ENCODE measurements at regions of chr17 and their contacts with region 1.

Region 1: GRCh38 chr17:42312285-42313130 is 24.2 kb downstream of the STAT5A start:
- DNase-seq: peak; percentile 77 to 86
- ATAC-seq: peak; percentile 74 to 89
- H3K4me3 ChIP-seq: no peak overlapping the region
- H3K27ac ChIP-seq: peak overlapping the region; percentile 36 to 76; a peak in 3 of 6 replicates
- H3K4me1 ChIP-seq: peaks cover 13% of the 10 kb centered on the region
- CTCF ChIP-seq: peak; percentile 77
- EP300 ChIP-seq: no peak
- POLR2A ChIP-seq: no peak
- RAD21 ChIP-seq: peak; percentile 84 to 91

Region 2: DNA sequence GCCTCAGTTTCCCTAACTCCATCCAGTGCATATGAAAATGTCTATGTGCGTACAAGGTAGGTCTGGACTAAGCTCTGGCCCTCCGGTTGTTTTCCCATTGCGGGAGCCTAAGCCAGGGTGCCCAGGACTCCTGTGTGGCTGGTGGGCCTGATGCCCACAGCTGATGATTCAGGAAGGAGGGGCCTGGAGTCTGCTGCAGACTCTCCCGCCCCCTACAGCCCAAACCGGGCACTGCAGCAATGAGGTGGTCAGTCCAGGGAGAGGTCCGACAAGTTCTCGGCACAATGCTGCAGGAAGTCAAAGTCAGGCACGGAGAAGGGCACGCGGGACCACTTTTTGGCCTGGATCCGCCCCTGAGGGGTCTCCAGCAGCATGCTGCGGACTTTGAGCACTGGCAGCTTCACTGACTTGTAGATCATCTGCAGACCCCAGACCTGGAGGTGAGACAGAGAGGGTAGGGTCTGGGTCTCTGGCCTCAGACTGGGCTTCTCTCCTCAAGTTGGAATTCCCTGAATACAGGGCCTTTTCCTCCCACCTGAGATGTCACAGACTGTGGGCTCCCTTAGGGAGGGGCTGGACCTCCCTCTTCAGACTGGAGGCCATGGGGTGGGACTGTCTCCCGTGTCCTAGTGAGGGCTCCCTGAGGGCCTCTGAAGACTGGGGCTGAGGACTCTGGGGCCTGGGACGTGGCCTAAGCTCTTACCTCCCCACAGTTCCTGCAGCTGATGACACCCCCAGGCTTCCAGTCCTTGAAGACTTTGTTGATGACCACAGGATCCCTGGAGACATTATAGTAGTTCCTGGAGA is 210.8 kb before region 1 on chr17:
- CTCF ChIA-PET with region 1: no interaction called
- POLR2A ChIA-PET with region 1: no interaction called
- DNase-seq: peak; percentile 76 to 93
- ATAC-seq: peak; percentile 61 to 89; a peak in 5 of 6 replicates
- H3K4me3 ChIP-seq: no peak overlapping the region
- H3K27ac ChIP-seq: no peak overlapping the region
- H3K4me1 ChIP-seq: no peaks in the 10 kb centered on the region
- CTCF ChIP-seq: peak; percentile 75
- EP300 ChIP-seq: no peak
- POLR2A ChIP-seq: no peak
- RAD21 ChIP-seq: peak; percentile 73 to 88

Region 3: DNA sequence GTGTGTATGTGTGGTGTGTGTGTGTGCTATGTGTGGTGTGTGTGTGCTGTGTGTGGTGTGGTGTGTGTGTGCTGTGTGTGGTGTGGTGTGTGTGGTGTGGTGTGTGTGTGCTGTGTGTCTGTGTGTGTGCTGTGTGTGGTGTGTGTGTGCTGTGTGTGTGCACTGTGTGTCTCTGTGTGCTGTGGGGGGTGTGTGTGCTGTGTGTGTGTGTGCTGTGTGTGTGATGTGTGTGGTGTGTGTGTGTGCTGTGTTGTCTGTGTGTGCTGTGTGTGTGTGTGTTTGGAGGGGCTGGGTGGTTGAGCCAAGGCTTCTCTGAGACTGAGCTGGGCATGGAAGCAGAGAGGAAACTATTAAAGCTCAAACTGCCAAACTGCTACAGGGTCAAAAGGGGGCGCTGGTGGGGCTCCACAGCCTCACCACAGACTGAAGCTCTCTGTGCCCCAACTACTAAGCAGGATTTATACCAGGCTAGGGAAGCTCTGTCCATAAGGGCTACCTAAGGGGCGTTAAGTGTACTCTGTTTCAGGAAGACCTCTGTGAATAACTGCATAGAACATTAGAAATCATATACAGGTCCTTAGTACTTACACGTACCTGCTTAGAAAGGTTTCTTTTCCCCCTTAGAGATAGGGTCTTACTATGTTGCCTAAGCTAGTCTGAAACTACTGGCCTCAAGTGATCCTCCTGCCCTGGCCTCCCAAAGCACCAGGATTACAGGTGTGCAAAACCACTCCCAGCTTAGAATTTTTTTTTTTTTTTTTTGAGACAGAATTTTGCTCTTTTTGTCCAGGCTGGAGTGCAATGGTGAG is 90.4 kb before region 1 on chr17:
- CTCF ChIA-PET with region 1: interaction called, 22 read pairs
- POLR2A ChIA-PET with region 1: no interaction called
- DNase-seq: peak; percentile 66 to 74
- ATAC-seq: peak; percentile 87 to 92
- H3K4me3 ChIP-seq: no peak overlapping the region
- H3K27ac ChIP-seq: no peak overlapping the region
- H3K4me1 ChIP-seq: no peaks in the 10 kb centered on the region
- CTCF ChIP-seq: peak; percentile 74
- EP300 ChIP-seq: no peak
- POLR2A ChIP-seq: no peak
- RAD21 ChIP-seq: peak; percentile 74 to 81

Region 4: DNA sequence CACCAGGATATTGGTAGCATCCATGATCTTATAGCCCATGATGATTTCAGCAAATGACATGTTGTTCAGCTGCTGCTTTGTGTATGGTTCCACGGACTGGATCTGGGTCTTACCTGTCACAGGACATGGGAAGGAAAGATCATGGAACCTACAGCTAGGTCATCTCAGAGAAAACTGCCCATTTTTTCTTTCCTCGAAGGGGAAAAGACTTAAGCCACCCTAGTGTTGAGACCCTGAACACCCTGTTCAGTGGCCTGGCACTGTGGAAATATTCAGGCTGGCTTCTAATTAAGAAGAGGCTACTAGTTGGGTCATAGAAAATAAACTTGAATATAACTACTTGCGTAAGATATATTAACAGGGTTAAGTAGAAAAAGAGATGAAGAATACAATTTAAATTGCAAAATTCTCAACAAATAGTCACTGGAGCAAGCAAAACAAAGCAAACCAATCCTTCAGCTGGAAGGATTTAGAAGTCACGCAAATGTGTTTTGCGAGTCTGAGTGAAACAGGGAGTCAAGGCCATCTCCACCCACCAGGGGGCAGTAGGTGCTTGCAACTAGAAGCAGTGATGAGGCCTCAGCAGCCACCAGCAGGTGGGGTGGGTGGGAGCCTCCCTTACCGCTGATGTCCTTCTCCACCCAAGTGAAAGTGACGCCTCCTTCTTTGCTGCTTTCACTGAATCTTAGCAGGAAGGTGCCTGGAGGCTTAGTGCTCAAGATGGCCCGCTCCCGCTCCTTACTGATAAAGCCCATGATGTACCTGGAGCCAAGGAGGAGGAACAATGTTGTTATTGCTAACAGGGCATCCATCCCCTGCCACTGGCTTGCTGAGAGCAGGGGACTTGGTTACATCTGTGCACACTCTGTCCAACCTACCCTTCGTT is 10.1 kb after region 1 on chr17:
- CTCF ChIA-PET with region 1: interaction called, 179 read pairs
- POLR2A ChIA-PET with region 1: no interaction called
- DNase-seq: peak; percentile 97 to 98
- ATAC-seq: peak; percentile 83 to 87
- H3K4me3 ChIP-seq: no peak overlapping the region
- H3K27ac ChIP-seq: peak overlapping the region; percentile 59 to 89
- H3K4me1 ChIP-seq: peaks cover 51% of the 10 kb centered on the region
- CTCF ChIP-seq: peak; percentile 100
- EP300 ChIP-seq: no peak
- POLR2A ChIP-seq: no peak
- RAD21 ChIP-seq: peak; percentile 100

Region 5: DNA sequence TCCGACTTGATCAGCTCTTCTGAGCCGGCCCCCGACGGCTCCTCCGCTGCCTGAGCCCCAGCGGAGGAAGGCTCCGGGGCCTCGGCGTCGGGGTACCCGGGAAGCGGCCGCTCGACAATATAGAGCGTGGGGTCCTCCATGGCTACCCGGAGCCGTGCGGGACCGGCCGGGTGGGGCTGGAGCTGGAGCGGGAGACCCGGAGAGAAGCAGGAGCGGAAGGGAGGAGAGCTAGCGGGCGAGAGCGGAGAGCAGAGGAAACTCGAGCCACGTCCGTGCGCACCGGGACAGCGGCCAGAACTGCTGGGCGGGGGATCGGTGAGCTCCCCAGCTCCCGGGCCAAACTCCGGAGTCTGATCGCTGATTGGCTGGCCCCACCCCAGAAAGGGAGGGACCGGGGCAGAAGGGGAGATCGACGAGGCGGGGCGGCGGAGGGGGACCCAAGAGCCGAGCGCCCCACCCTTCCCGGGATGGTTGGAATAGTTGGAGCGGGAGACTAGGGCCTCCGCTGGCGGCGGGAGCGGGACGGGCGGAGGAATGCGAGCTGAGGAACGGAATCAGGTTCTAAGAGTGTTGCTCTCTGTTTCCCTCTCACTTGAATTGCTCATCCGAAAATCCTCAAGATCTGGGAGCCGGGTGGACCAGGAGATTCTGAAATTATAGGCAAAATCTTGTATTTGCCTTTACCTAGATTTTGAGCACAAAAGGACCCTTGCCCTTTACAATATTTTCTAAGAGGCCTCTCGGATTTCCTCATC is 110.6 kb after region 1 on chr17 and contains the start of gene CAVIN1:
- CTCF ChIA-PET with region 1: interaction called, 15 read pairs
- POLR2A ChIA-PET with region 1: interaction called, 6 read pairs
- DNase-seq: peak; percentile 97 to 99
- ATAC-seq: peak; percentile 71 to 86
- H3K4me3 ChIP-seq: peak within 1 kb of the TSS; percentile 93
- H3K27ac ChIP-seq: peak within 1 kb of the TSS; percentile 93 to 95
- H3K4me1 ChIP-seq: peaks cover 45% of the 10 kb centered on the region
- CTCF ChIP-seq: no peak
- EP300 ChIP-seq: no peak
- POLR2A ChIP-seq: peak; percentile 99
- RAD21 ChIP-seq: peak in 1 of 2 experiments; percentile 18; a peak in 1 of 5 replicates
- polyA plus RNA-seq, gene CAVIN1: 91.4 and 101 TPM in 2 replicates

Region 6: DNA sequence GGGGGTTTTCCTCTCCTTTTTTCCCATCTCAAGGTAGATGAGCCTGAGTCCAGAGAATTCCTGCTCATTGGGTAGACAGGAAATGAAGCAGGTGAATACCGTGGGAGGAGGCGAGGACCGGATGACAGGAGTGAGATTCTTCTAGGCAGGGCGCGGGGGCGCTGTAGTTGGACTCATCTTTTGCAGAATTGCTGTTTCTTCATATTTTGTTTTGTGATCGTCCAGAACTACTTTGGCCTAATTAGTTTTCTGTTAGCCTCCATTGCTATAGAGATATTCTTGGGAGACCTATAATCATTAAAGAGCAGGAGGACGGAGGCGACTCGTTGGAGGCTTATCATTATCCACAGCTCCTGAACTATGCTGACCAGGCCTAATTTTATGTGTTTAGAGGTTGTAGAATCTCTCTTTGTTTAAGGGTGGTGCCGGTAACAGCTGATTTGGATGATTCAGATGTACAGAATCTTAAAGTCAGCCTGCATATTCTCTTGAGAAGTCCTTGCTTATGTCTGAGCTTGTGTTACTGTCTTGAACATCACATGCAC is 146.8 kb after region 1 on chr17:
- CTCF ChIA-PET with region 1: interaction called, 17 read pairs
- POLR2A ChIA-PET with region 1: no interaction called
- DNase-seq: peak; percentile 68 to 74
- ATAC-seq: peak; percentile 77 to 79
- H3K4me3 ChIP-seq: peak overlapping the region; percentile 83
- H3K27ac ChIP-seq: peak overlapping the region; percentile 84 to 88
- H3K4me1 ChIP-seq: peaks cover 48% of the 10 kb centered on the region
- CTCF ChIP-seq: peak; percentile 79
- EP300 ChIP-seq: no peak
- POLR2A ChIP-seq: no peak
- RAD21 ChIP-seq: 0 out of 5 replicates have a peak, but pooled peaks of 1 of the 2 experiments have one; percentile 22